CD4-positive, alpha-beta T cell (primary cell): ENCODE measurements at regions of chr18 and their contacts with region 1.

Region 1: GRCh38 chr18:9614401-9615279 is at the start of gene PPP4R1:
- DNase-seq: peak; percentile 40 to 86 (median 66)
- ATAC-seq: peak; percentile 53
- H3K4me3 ChIP-seq: peak within 1 kb of the TSS; percentile 79
- H3K4me3 Mint-ChIP-seq: peak within 1 kb of the TSS; percentile 97
- H3K27ac ChIP-seq: peak within 1 kb of the TSS; percentile 33 to 53
- H3K27ac Mint-ChIP-seq: peak within 1 kb of the TSS; percentile 88
- H3K4me1 ChIP-seq: peaks cover 21% of the 10 kb centered on the region
- H3K4me1 Mint-ChIP-seq: peaks cover 37% of the 10 kb centered on the region
- H3K27me3 ChIP-seq: no peaks in the 10 kb centered on the region
- H3K27me3 Mint-ChIP-seq: no peaks in the 10 kb centered on the region
- CTCF ChIP-seq: no peak
- total RNA-seq, gene PPP4R1: 35.7 to 40.2 TPM

Region 2: GRCh38 chr18:9638904-9639303 is 24.3 kb after region 1 on chr18:
- CTCF ChIA-PET with region 1: no interaction called
- POLR2A ChIA-PET with region 1: no interaction called
- intact Hi-C with region 1: no loop called
- DNase-seq: no peak
- ATAC-seq: no peak
- H3K4me3 ChIP-seq: no peak overlapping the region
- H3K4me3 Mint-ChIP-seq: no peak overlapping the region
- H3K27ac ChIP-seq: no peak overlapping the region
- H3K27ac Mint-ChIP-seq: no peak overlapping the region
- H3K4me1 ChIP-seq: no peaks in the 10 kb centered on the region
- H3K4me1 Mint-ChIP-seq: no peaks in the 10 kb centered on the region
- H3K27me3 ChIP-seq: peaks cover 0 to 5% of the 10 kb centered on the region in 2 experiments
- H3K27me3 Mint-ChIP-seq: peaks cover 3% of the 10 kb centered on the region
- CTCF ChIP-seq: no peak

Region 3: GRCh38 chr18:9673296-9674251 is 58.9 kb after region 1 on chr18:
- CTCF ChIA-PET with region 1: interaction called, 3 read pairs
- POLR2A ChIA-PET with region 1: no interaction called
- intact Hi-C with region 1: loop called in 1 of 2 experiments (anchors 5 kb)
- DNase-seq: peak in 4 of 14 experiments; percentile 15 to 54 (median 40)
- ATAC-seq: peak; percentile 68
- H3K4me3 ChIP-seq: no peak overlapping the region
- H3K4me3 Mint-ChIP-seq: no peak overlapping the region
- H3K27ac ChIP-seq: no peak overlapping the region
- H3K27ac Mint-ChIP-seq: peak overlapping the region; percentile 18
- H3K4me1 ChIP-seq: peaks cover 6% of the 10 kb centered on the region
- H3K4me1 Mint-ChIP-seq: peaks cover 6% of the 10 kb centered on the region
- H3K27me3 ChIP-seq: no peaks in the 10 kb centered on the region
- H3K27me3 Mint-ChIP-seq: peaks cover 4% of the 10 kb centered on the region
- CTCF ChIP-seq: no peak

Region 4: GRCh38 chr18:10519999-10520935 is 905.6 kb after region 1 on chr18:
- CTCF ChIA-PET with region 1: no interaction called
- POLR2A ChIA-PET with region 1: no interaction called
- intact Hi-C with region 1: loop called in 1 of 2 experiments (anchors 5 kb)
- DNase-seq: peak; percentile 16 to 83 (median 46)
- ATAC-seq: peak; percentile 96
- H3K4me3 ChIP-seq: no peak overlapping the region
- H3K4me3 Mint-ChIP-seq: no peak overlapping the region
- H3K27ac ChIP-seq: no peak overlapping the region
- H3K27ac Mint-ChIP-seq: no peak overlapping the region
- H3K4me1 ChIP-seq: peaks cover 11% of the 10 kb centered on the region
- H3K4me1 Mint-ChIP-seq: peaks cover 17% of the 10 kb centered on the region
- H3K27me3 ChIP-seq: peaks cover 16 to 21% of the 10 kb centered on the region in 2 experiments
- H3K27me3 Mint-ChIP-seq: peaks cover 50% of the 10 kb centered on the region
- CTCF ChIP-seq: peak; percentile 68